Activated CD8-positive, alpha-beta T cell treated with anti-CD3 and anti-CD28 coated beads, Interleukin-2, amount 10 ng/mL, durations not matched to agents 7 days and 5 days (primary cell): ENCODE measurements at regions of chr2 and their contacts with region 1.

Region 1: GRCh38 chr2:230793572-230794359 is 71.0 kb upstream of the ITM2C start:
- DNase-seq: peak; percentile 83
- ATAC-seq: peak; percentile 93
- H3K4me3 Mint-ChIP-seq: peak overlapping the region; percentile 65
- H3K27ac Mint-ChIP-seq: peak overlapping the region; percentile 89
- H3K4me1 Mint-ChIP-seq: peaks cover 49% of the 10 kb centered on the region
- H3K27me3 Mint-ChIP-seq: no peaks in the 10 kb centered on the region

Region 2: DNA sequence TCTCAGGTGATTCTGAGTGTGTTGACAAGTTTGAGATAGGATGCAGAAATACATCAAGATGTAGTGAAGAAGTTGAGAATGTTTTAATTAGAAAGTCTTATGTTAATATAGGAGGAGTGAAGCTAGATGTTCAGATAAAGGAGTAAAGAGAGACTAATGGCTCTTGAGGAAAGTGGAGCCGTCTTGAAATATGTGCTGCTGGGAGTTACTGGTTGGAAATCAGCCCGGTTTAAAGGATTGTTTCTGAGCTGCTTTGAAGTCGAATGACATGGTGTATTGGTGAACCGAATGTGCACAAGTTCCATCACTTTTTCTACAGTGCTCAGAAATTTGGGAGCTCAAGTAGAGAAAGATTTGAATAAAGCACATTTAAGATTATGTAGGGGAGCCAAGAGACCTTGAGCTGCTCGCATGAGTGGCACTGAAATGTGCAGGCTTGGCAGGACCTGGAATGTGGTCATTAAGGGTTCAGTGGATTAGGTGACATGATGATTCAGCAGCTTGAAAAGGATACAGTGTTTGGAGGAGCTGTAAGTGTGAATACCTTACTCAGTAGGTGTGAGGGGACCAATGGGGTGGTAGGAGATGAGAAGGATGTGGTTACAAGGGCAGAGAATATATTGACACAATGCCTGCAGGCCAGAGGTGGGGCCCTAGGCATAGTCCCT is 12.5 kb before region 1 on chr2:
- CTCF ChIA-PET with region 1: interaction called, 23 read pairs
- POLR2A ChIA-PET with region 1: interaction called, 13 read pairs
- DNase-seq: peak; percentile 76
- ATAC-seq: peak; percentile 76
- H3K4me3 Mint-ChIP-seq: peak overlapping the region; percentile 0
- H3K27ac Mint-ChIP-seq: peak overlapping the region; percentile 87
- H3K4me1 Mint-ChIP-seq: peaks cover 85% of the 10 kb centered on the region
- H3K27me3 Mint-ChIP-seq: no peaks in the 10 kb centered on the region

Region 3: DNA sequence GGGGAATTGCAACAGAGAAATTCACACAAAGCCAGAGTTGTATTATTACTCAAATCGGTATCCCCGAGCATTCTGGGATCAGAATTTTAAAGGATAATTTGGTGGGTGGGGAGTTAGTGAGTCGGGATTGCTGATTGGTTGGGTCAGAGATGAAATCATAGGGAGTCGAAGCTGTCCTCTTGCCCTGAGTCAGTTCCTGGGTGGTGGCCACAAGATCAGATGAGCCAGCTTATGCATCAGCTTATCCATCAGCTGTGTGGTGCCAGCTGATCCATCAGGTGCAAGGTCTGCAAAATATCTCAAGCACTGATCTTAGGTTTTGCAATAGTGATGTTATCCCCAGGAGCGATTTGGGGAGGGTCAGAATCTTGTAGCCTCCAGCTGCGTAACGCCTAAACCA is 36.7 kb after region 1 on chr2:
- CTCF ChIA-PET with region 1: no interaction called
- POLR2A ChIA-PET with region 1: no interaction called
- DNase-seq: no peak
- ATAC-seq: no peak
- H3K4me3 Mint-ChIP-seq: no peak overlapping the region
- H3K27ac Mint-ChIP-seq: no peak overlapping the region
- H3K4me1 Mint-ChIP-seq: peaks cover 18% of the 10 kb centered on the region
- H3K27me3 Mint-ChIP-seq: peaks cover 52% of the 10 kb centered on the region

Region 4: GRCh38 chr2:230913406-230914143 is 119.8 kb after region 1 on chr2:
- CTCF ChIA-PET with region 1: no interaction called
- POLR2A ChIA-PET with region 1: no interaction called
- DNase-seq: no peak
- ATAC-seq: no peak
- H3K4me3 Mint-ChIP-seq: no peak overlapping the region
- H3K27ac Mint-ChIP-seq: no peak overlapping the region
- H3K4me1 Mint-ChIP-seq: peaks cover 47% of the 10 kb centered on the region
- H3K27me3 Mint-ChIP-seq: no peaks in the 10 kb centered on the region